Activated CD8-positive, alpha-beta T cell treated with anti-CD3 and anti-CD28 coated beads, Interleukin-2, amount 10 ng/mL, durations not matched to agents 7 days and 5 days (primary cell): ENCODE measurements at regions of chr11 and their contacts with region 1.

Region 1: DNA sequence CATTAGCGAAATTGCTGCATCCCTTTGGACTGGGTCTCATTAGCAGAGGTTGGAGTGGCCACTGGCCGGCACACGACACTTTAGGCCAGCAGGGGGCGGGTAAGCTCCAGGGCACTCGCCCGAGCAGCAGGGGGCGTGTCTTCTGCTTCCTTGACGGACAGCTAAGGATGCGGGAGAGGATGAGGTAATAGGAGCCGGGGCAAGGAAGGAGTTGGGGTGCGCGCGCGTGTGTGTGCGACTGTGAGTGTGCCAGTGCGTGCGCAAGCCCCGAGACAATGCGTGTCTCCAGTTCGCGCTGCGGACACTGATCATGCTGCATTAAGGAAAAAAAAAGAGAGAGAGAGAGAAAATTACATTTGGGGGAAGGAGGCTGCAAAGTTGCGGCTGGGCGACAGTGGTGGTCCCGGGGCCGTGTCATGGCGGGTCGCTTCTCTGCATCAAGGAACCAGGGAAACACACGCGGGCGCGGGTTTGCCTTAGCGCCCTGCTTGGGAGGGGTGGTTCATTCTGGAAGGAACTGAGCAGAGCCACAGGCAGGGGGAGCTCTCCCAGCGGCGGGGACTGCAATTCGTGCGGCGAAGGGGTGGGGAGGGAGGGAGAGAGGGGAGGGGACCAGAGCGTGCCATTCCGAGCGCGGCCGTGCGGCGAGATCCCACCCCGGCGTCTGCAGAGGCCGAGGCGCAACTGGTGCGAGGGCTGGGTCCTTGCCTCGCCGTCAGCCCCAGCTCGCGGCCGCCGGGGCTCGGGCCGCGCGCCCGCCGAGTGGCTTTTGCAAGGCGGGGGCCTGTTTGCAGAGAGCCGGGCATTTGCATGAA is at the start of gene DTX4:
- DNase-seq: peak; percentile 93
- ATAC-seq: peak; percentile 88
- H3K4me3 Mint-ChIP-seq: peak within 1 kb of the TSS; percentile 64
- H3K27ac Mint-ChIP-seq: no peak within 1 kb of the TSS
- H3K4me1 Mint-ChIP-seq: peaks cover 7% of the 10 kb centered on the region
- H3K27me3 Mint-ChIP-seq: peaks cover 27% of the 10 kb centered on the region
- total RNA-seq, gene DTX4: 0.18 to 0.45 TPM

Region 2: GRCh38 chr11:59142530-59143507 is 28.9 kb before region 1 on chr11 and contains the start of gene FAM111A:
- CTCF ChIA-PET with region 1: interaction called, 33 read pairs
- POLR2A ChIA-PET with region 1: interaction called, 3 read pairs
- DNase-seq: peak; percentile 94
- ATAC-seq: peak; percentile 93
- H3K4me3 Mint-ChIP-seq: peak within 1 kb of the TSS; percentile 97
- H3K27ac Mint-ChIP-seq: peak within 1 kb of the TSS; percentile 97
- H3K4me1 Mint-ChIP-seq: peaks cover 55% of the 10 kb centered on the region
- H3K27me3 Mint-ChIP-seq: no peaks in the 10 kb centered on the region
- total RNA-seq, gene FAM111A: 154 to 167 TPM

Region 3: DNA sequence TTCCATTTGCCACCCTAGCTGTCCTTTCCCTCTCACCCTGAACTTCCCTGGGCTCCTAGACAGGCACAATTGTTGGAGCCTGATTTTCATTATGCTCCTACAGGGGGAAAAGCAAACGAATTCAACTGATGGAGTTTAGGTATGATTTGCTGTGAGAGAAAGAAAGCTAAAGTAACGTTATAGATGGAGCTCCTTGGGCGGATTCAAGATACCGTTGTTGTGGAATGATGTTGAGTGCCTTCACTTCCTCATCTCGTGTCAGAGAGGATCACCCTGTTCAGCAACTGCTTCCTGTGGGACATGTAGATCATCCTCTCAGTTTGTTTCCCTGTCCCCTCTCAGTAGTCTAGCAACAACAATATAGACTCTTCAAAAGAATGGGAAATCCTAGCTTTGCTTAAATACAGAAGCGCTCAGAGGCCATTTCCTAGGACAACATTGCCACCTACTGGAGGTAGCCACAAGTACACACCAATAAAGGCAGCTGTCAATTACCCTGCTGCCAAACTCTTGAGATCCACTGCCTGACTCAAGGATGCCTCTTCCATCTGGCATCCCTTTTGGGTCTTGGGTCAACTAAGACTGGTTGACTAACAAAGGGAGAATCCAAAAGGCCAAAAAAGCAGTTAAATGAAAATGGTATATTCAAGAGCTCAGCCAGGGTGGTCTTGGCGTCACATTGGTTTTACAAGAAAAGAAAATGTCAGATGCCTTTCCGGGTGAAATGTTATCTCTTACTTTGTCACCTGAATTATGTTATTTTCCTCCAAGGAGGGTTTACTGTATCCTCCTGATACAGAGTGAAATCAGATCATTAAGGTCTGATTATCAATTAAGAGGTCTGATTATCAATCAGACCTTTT is 13.3 kb before region 1 on chr11:
- CTCF ChIA-PET with region 1: interaction called, 57 read pairs
- POLR2A ChIA-PET with region 1: no interaction called
- DNase-seq: peak; percentile 76
- ATAC-seq: peak; percentile 95
- H3K4me3 Mint-ChIP-seq: no peak overlapping the region
- H3K27ac Mint-ChIP-seq: peak overlapping the region; percentile 18
- H3K4me1 Mint-ChIP-seq: peaks cover 8% of the 10 kb centered on the region
- H3K27me3 Mint-ChIP-seq: peaks cover 15% of the 10 kb centered on the region

Region 4: DNA sequence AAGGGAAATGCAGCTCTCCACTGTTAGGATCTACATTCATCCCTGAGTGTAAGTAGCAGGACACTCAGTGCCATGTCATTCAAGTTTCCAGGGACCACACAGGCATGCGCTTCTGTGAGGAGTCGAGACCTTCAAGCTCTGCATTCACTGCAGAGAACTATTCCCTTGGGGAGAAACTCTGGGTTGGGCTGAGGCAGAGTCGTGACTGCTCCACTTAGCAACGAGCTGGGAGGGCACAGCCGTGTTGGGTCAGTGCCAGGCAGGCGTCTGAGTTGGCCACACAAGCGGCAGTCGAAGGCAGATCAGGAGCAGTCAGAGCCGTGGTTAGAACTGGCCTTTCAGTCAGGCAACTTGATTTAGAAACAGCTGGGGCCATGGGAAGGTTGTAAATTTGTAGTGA is 26.3 kb after region 1 on chr11:
- CTCF ChIA-PET with region 1: interaction called, 30 read pairs
- POLR2A ChIA-PET with region 1: no interaction called
- DNase-seq: no peak
- ATAC-seq: no peak
- H3K4me3 Mint-ChIP-seq: no peak overlapping the region
- H3K27ac Mint-ChIP-seq: no peak overlapping the region
- H3K4me1 Mint-ChIP-seq: no peaks in the 10 kb centered on the region
- H3K27me3 Mint-ChIP-seq: peaks cover 2% of the 10 kb centered on the region

Region 5: GRCh38 chr11:59283825-59284772 is 112.4 kb after region 1 on chr11:
- CTCF ChIA-PET with region 1: interaction called, 15 read pairs
- POLR2A ChIA-PET with region 1: no interaction called
- DNase-seq: peak; percentile 71
- ATAC-seq: peak; percentile 81
- H3K4me3 Mint-ChIP-seq: peak overlapping the region; percentile 58
- H3K27ac Mint-ChIP-seq: peak overlapping the region; percentile 27
- H3K4me1 Mint-ChIP-seq: peaks cover 15% of the 10 kb centered on the region
- H3K27me3 Mint-ChIP-seq: peaks cover 20% of the 10 kb centered on the region